Heart right ventricle (tissue), 16 donors: ENCODE measurements at regions of chr15 and their contacts with region 1.

Region 1: DNA sequence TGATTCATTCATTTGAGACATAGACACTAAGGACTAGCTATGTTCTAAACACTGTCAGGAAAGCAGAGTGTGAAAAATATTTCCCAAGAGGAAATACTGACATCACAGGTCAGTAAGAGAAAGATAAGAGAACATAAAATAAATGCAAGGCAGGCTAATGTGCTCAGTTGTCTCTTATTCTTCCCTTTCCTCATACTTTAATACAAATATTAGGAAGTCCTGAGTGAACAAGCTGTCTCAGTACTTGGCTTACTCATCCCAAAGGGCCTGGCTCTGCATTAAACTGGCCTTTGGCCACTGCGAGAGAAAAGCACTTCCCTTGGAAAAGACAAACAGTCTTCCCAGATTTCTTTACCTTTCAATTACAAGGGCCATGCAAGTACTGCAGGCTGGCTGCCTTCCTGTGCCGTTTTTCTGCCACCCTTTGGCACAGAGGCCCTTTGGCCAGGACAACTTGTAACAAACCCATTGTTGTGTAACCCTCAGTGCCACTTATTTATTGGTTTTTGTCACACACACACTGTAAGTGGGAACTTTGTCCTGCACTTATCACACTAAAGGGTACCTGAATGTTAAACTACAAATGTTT is 31.7 kb downstream of the EDC3 start:
- DNase-seq: peak in 1 of 2 donors; percentile 23
- ATAC-seq: peak in 6 of 8 donors; percentile 24 to 95 (median 76)
- H3K4me3 ChIP-seq: no peak overlapping the region
- H3K27ac ChIP-seq: peak overlapping the region in 7 of 10 donors; percentile 8 to 76 (median 48)
- H3K4me1 ChIP-seq: peaks cover 2 to 32% (median 23%) of the 10 kb centered on the region in 9 donors
- H3K27me3 ChIP-seq: no peaks in the 10 kb centered on the region
- CTCF ChIP-seq: no peak

Region 2: GRCh38 chr15:74723754-74724334 is 59.7 kb after region 1 on chr15:
- intact Hi-C with region 1: loop called in 1 of 10 experiments (anchors 10 kb)
- DNase-seq: peak in 1 of 2 donors; percentile 19
- ATAC-seq: peak in 5 of 8 donors; percentile 47 to 64 (median 59)
- H3K4me3 ChIP-seq: no peak overlapping the region
- H3K27ac ChIP-seq: no peak overlapping the region
- H3K4me1 ChIP-seq: peaks cover 3 to 31% (median 21%) of the 10 kb centered on the region in 9 donors
- H3K27me3 ChIP-seq: peaks cover 0 to 46% (median 0%) of the 10 kb centered on the region in 7 donors
- CTCF ChIP-seq: no peak